Activated CD4-positive, alpha-beta T cell treated with anti-CD3 and anti-CD28 coated beads, Interleukin-2, amount 10 ng/mL, durations not matched to agents 24 days and 14 days (primary cell): ENCODE measurements at regions of chr5 and their contacts with region 1.

Region 1: GRCh38 chr5:139633295-139634027 is 14.7 kb upstream of the CXXC5 start:
- DNase-seq: peak; percentile 89
- H3K4me3 Mint-ChIP-seq: no peak overlapping the region
- H3K27ac Mint-ChIP-seq: peak overlapping the region; percentile 1
- H3K4me1 Mint-ChIP-seq: peaks cover 33% of the 10 kb centered on the region
- H3K27me3 Mint-ChIP-seq: no peaks in the 10 kb centered on the region

Region 2: GRCh38 chr5:139574641-139575312 is 58.7 kb before region 1 on chr5:
- intact Hi-C with region 1: loop called (anchors 2 kb)
- DNase-seq: peak; percentile 76
- H3K4me3 Mint-ChIP-seq: no peak overlapping the region
- H3K27ac Mint-ChIP-seq: peak overlapping the region; percentile 68
- H3K4me1 Mint-ChIP-seq: peaks cover 58% of the 10 kb centered on the region
- H3K27me3 Mint-ChIP-seq: no peaks in the 10 kb centered on the region

Region 3: DNA sequence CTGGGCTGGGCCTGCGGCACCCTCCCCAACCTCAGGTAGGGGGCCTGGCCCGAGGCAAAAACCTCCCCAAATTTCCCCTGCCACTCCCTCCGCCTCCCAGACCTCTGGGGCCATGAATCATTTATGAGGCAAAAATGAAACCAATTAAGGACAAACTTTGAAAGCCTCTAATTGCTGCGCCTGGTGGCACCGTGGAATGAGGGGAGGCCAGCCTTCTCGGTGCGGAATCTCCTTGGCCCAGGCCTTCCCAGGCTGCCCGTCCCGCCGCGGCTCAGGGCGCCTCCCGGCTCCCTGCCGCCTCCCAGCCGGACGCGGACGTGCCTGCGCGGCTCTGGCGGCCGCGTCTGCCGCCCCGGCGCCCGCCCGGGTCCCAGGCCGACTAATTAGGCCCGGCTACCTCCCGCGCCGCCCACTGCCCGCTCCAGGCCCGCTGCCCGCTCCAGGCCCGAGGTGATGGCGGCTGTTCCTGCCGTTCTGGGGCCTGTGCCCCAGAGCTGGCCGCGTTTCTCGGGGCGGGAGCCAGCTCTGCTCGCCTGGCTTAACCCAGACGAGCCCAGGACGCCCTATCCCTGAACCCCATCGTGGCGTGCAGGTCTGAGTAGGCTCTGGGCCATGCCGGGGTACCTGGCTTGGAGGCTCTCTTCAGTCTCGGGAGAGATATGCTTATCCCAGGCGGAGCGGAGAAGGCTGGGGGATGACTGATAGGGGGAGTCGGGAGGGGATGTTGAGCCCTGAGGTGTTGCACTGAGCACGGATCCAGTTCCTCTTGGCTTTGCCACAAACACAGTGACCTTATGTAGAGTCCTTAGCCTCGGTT is 34.8 kb after region 1 on chr5:
- intact Hi-C with region 1: loop called (anchors 2 kb)
- DNase-seq: peak; percentile 80
- H3K4me3 Mint-ChIP-seq: peak overlapping the region; percentile 73
- H3K27ac Mint-ChIP-seq: peak overlapping the region; percentile 20
- H3K4me1 Mint-ChIP-seq: peaks cover 33% of the 10 kb centered on the region
- H3K27me3 Mint-ChIP-seq: no peaks in the 10 kb centered on the region

Region 4: DNA sequence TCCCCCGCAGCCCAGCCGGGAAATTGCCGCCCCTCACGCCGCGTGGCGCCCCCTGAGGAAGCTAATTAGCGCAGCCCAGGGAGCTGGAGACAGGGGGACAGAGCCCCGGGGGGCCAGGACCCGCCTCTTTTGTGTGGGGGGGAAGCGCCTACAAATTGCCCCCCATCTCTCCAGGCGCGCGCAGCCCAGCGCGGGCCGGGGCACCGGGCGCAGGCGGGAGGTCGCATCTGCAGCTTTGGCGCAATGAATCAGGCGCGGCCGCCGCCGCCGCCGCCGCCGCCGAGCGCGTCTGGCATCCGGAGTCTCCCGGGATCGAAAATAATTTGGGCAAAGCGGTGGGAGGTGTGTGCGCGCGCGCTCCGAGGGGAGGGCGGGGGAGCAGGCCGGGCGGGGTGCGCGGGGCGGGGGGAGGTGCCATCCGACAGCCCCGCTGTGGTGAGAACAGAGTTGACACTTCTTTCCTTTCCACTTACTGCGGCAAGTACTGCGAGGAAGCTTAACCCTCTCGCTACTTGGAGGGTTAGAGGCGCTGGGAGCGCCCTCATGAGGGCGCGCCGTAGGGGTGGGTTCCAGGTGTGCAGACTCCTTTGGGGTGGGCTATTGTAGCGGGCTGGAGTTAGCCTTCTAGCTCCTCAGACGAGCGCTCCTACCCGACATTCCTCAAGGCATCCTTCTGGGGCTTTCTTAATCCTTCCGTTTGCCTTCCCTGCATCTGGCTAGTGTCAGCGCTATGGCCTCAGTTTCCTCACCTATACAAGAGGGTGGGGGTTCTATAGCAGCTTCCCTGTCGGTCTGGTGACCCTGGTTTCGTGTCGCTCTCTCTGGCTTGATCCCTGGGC is 77.8 kb after region 1 on chr5:
- intact Hi-C with region 1: loop called (anchors 2 kb)
- DNase-seq: peak; percentile 78
- H3K4me3 Mint-ChIP-seq: peak overlapping the region; percentile 73
- H3K27ac Mint-ChIP-seq: no peak overlapping the region
- H3K4me1 Mint-ChIP-seq: peaks cover 13% of the 10 kb centered on the region
- H3K27me3 Mint-ChIP-seq: peaks cover 42% of the 10 kb centered on the region

Region 5: DNA sequence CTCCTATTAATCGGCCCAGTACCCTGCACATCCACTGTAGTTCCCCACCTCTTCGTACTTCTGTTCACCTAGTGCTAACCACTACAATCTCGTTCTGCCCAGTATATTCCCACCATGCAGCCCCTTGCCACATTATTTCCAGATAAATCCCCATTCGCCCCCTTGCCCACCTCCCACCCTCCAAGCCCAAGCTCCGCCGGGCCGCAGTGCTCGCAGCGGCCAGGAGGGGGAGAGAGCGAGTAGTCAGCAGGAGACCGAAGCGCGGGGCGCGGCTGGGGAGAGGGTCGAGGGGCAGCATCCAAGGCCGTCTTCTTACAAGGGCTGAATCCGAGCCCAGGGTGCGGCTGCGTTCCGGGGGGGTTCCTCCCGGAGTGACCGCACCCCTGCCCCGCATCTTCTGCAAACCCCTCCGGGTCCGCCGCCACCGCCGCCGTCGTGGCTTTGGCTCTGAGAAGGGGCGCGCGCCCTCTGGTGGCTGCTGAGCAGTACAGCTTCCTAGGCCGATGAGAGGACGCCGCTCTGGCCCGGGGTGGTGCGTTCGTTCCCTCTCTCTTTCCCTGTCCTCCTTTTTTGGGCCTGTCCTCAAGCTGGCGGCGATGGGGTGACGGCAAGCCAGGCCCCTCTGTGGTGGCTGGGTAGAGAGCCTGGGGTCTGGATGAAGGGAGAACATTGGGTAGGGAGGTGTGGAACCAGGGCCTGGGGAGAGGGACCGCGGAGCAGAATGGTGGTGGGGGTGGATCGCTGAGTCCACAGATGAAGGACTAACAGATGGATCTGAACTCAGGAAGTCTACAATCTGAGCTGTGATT is 132.2 kb after region 1 on chr5:
- intact Hi-C with region 1: loop called (anchors 1 kb)
- DNase-seq: peak; percentile 92
- H3K4me3 Mint-ChIP-seq: peak overlapping the region; percentile 79
- H3K27ac Mint-ChIP-seq: peak overlapping the region; percentile 39
- H3K4me1 Mint-ChIP-seq: peaks cover 10% of the 10 kb centered on the region
- H3K27me3 Mint-ChIP-seq: peaks cover 38% of the 10 kb centered on the region